ENCODE measurements at regions of chr9 and their contacts with region 1.

Region 1: DNA sequence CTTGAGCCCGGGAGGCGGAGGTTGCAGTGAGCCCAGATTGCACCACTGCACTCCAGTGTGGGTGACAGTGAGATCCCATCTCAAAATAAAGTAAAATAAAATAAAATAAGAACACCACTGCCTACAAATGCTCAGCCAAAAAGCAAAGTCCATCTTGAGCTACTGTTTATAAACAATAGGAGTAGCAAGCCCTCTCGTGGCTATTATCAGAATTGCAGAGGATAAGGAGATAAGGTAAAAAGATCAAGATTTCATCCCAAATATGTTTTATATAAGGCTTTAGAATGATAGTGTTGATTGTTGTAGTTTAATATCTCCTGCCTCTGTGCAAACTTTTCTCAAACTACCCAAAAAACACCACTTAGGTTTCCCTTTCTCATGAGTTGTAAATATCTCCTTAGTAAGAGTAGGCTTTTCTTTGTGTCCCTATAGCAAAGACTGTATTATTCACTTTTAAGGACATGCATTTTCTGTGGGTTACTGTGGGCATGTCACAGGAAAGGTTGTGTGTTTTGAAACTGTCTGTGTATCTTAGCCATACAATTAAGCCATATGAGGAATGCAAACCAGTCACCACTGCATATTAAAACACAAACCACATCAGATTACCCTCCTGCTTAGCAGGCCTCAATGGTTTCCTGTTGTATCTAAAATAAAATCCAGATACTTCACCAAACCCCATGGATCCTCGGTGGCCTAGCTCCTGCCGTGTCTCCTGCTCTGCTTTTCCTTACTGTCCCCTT is 31.8 kb upstream of the CKS2 start:
- DNase-seq: no peak
- ATAC-seq: no peak
- H3K4me3 ChIP-seq: no peak overlapping the region
- H3K27ac ChIP-seq: no peak overlapping the region
- H3K4me1 ChIP-seq: no peaks in the 10 kb centered on the region
- H3K27me3 ChIP-seq: no peaks in the 10 kb centered on the region
- CTCF ChIP-seq: peak in 4 of 5 experiments; percentile 8 to 54 (median 35)
- POLR2A ChIP-seq: no peak

Region 2: GRCh38 chr9:88578121-88579054 is 700.8 kb before region 1 on chr9:
- in situ Hi-C with region 1: loop called in 1 of 4 experiments (anchors 25 kb)
- intact Hi-C with region 1: no loop called
- DNase-seq: peak; percentile 38 to 44
- ATAC-seq: peak; percentile 58 to 74
- H3K4me3 ChIP-seq: peak overlapping the region in 1 of 4 donors; percentile 39
- H3K27ac ChIP-seq: no peak overlapping the region
- H3K4me1 ChIP-seq: no peaks in the 10 kb centered on the region
- H3K27me3 ChIP-seq: no peaks in the 10 kb centered on the region
- CTCF ChIP-seq: peak; percentile 59 to 92 (median 82)
- POLR2A ChIP-seq: no peak

Region 3: GRCh38 chr9:88593537-88594185 is 685.5 kb before region 1 on chr9:
- in situ Hi-C with region 1: loop called in 1 of 4 experiments (anchors 10 kb)
- intact Hi-C with region 1: no loop called
- DNase-seq: no peak
- ATAC-seq: no peak
- H3K4me3 ChIP-seq: no peak overlapping the region
- H3K27ac ChIP-seq: no peak overlapping the region
- H3K4me1 ChIP-seq: no peaks in the 10 kb centered on the region
- H3K27me3 ChIP-seq: no peaks in the 10 kb centered on the region
- CTCF ChIP-seq: peak; percentile 25 to 53 (median 48)
- POLR2A ChIP-seq: no peak

Region 4: DNA sequence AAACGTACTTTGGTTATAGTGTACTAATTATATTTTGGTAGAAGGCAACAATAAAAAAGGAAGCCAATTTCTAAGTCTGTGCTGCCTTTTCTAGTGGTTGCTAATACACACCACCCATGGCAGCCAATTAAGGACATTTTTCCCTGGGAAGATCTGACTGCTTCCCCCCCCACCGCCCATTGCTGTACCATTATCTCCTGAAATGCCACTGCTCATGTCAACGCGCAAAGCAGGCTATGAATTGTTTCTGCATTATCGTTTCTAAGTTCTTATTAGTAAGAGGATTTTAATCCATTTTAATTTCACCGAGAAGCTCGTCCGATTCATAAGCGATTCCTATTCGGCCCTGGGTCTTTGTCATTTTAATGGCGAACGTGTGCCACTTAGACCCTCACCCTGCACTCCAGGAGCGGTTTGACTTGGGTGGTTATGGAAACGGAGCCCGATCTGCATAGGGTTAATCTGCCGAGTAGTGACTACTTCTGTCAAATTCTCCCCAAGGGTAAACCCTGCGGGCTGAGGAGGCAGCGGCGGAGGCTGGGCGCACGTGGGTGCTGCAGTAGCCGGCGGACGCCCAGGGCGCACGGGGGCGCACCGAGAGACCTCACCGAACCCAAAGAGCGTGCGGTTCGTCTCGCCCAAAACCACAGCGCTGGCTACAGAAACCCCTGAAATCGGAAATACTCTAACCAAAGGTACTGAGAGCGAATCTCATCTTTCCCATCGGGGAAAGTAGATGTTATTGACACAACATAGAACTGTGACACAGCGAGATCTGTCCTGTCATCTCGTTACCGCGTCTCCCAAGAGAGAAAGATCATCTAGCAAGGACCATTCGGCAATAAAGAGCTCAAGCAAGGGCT is 44.7 kb before region 1 on chr9:
- in situ Hi-C with region 1: no loop called
- intact Hi-C with region 1: no loop called
- DNase-seq: no peak
- ATAC-seq: no peak
- H3K4me3 ChIP-seq: peak overlapping the region in 2 of 4 donors; percentile 5 to 38
- H3K27ac ChIP-seq: no peak overlapping the region
- H3K4me1 ChIP-seq: no peaks in the 10 kb centered on the region
- H3K27me3 ChIP-seq: no peaks in the 10 kb centered on the region
- CTCF ChIP-seq: no peak
- POLR2A ChIP-seq: no peak

Region 5: GRCh38 chr9:89254772-89255123 is 24.4 kb before region 1 on chr9:
- in situ Hi-C with region 1: no loop called
- intact Hi-C with region 1: no loop called
- DNase-seq: no peak
- ATAC-seq: no peak
- H3K4me3 ChIP-seq: no peak overlapping the region
- H3K27ac ChIP-seq: no peak overlapping the region
- H3K4me1 ChIP-seq: no peaks in the 10 kb centered on the region
- H3K27me3 ChIP-seq: no peaks in the 10 kb centered on the region
- CTCF ChIP-seq: no peak
- POLR2A ChIP-seq: no peak

Region 6: DNA sequence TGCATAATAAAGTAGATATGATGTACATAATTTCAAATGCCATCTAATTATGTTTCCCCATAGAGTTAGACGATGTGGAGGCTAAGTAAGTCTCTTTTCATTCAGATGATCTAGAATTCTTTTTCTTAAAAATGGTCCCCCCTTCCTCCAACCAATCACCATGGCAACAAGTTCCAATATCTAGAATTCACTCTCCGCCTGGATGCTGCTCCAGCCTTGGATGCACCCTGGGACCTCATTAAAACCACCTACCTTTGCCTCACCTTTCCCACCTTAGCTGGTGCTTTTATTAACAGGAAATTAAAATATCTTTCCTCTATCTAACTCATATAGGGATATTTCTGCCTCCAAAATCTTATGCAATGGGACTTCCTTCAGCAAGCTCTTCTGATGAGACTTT is 1314.5 kb after region 1 on chr9:
- in situ Hi-C with region 1: no loop called
- intact Hi-C with region 1: loop called (anchors 10 kb)
- DNase-seq: no peak
- ATAC-seq: no peak
- H3K4me3 ChIP-seq: no peak overlapping the region
- H3K27ac ChIP-seq: no peak overlapping the region
- H3K4me1 ChIP-seq: no peaks in the 10 kb centered on the region
- H3K27me3 ChIP-seq: no peaks in the 10 kb centered on the region
- CTCF ChIP-seq: no peak
- POLR2A ChIP-seq: no peak

Measured in gastrocnemius medialis (tissue), 4 donors.